K562 (cell line): ENCODE measurements at regions of chr12 and their contacts with region 1.

Region 1: DNA sequence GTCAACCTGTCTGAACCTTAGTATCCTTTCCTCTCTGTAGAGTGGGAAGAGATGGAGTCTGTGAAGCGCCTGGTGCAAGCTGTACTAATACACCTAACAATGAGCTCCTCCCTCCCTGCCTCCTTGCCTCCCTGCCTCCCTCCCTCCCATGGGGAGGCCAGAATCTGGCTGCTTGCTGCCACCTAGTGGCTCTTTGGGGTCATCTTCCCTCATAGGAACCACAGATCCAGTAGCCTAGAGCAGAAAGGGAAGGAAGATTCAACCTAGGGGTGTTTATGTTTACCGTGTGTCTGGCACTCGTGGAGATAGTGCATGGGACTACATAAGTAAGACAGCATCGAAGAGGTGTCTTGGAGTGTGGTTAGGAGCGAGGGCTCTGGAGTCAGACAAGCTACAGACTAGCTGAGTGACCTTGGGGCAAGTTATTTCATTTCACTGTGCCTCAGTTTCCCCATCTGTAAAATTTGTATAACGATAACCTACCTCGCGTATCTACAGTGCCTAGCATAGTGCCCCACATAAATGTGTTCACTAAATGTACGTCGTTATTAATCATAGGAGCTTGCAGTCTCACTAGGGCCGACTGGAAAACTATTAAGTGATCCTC is 35.5 kb upstream of the TSPAN9 start:
- DNase-seq: peak; percentile 78 to 85 (median 78)
- ATAC-seq: peak; percentile 99
- H3K4me3 ChIP-seq: no peak overlapping the region
- H3K27ac ChIP-seq: no peak overlapping the region
- H3K4me1 ChIP-seq: peaks cover 0 to 8% of the 10 kb centered on the region in 2 experiments; a peak in 2 of 5 replicates
- H3K27me3 ChIP-seq: no peaks in the 10 kb centered on the region
- CTCF ChIP-seq: peak; percentile 63 to 74 (median 71)
- EP300 ChIP-seq: no peak
- POLR2A ChIP-seq: no peak
- RAD21 ChIP-seq: peak; percentile 27 to 46; a peak in 3 of 4 replicates

Region 2: DNA sequence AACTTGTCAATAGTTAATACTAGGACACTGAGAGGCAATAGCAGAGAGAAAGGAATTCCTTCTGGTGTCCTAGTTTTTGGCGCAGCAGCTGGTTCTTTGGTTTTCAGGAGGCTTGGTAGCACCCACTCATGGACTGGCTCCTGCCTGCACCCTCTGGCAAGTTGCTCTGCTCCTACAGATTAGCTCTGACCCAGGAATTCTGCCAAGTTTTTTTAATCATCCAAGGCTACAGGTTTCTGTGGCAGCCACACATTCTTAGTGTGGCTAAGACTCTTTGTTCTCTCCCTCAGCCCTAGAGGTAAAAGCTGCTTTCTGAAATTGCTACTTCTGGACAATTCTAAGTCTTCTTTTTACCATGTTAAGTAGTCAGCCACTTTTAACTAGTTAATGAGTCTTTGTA is 318.9 kb before region 1 on chr12:
- CTCF ChIA-PET with region 1: no interaction called
- POLR2A ChIA-PET with region 1: no interaction called
- in situ Hi-C with region 1: no loop called
- intact Hi-C with region 1: no loop called
- DNase-seq: no peak
- ATAC-seq: no peak
- H3K4me3 ChIP-seq: no peak overlapping the region
- H3K27ac ChIP-seq: no peak overlapping the region
- H3K4me1 ChIP-seq: no peaks in the 10 kb centered on the region
- H3K27me3 ChIP-seq: no peaks in the 10 kb centered on the region
- CTCF ChIP-seq: no peak
- EP300 ChIP-seq: no peak
- POLR2A ChIP-seq: no peak
- RAD21 ChIP-seq: no peak

Region 3: DNA sequence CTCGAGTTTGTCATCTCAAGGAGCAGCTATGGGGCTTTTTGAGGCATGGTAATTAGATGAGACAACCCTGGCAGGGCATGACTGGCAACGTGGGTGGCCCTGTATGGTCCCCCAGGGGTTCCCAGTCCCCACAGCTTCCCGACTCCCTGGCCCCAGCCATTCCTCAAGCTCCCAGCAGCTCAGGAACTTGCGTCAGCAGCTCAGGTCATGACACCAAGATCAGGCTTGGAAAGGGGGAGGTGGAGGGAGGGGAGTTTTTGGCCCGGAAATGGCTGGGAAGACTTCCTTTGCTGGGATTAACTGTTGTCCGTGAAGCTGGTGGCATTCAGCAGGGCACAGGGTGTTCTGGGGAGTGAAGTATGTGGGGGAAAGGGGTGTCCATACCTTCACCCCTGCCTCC is 196.4 kb before region 1 on chr12:
- CTCF ChIA-PET with region 1: interaction called, 3 read pairs
- POLR2A ChIA-PET with region 1: no interaction called
- in situ Hi-C with region 1: loop called (anchors 5 kb)
- intact Hi-C with region 1: loop called (anchors 1 kb)
- DNase-seq: peak in 1 of 4 experiments; percentile 24
- ATAC-seq: peak; percentile 50
- H3K4me3 ChIP-seq: no peak overlapping the region
- H3K27ac ChIP-seq: no peak overlapping the region; the same call in 2 of the 3 replicates
- H3K4me1 ChIP-seq: peaks cover 8% of the 10 kb centered on the region in 2 experiments; a peak in 4 of 5 replicates
- H3K27me3 ChIP-seq: no peaks in the 10 kb centered on the region
- CTCF ChIP-seq: no peak
- EP300 ChIP-seq: no peak
- POLR2A ChIP-seq: no peak
- RAD21 ChIP-seq: no peak

Region 4: DNA sequence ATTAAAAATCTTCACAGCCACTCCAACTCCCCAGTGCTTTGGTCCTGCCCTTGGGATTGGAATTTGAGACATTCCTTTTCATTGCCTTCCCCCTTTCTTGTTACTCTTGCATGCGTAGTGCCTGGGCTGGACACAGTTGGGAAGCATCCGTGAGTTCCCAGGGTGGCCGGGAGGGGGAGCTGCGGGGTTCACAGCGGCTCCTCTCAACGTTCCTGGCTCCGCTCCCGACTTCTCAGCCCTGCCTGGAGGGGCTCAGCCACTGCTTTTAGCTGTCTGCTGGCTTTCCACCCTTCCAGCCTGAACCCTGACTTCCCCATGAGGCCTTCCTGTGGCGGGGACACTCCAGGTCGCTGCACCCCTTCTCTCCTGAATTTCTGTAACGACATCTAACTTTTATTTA is 188.0 kb before region 1 on chr12:
- CTCF ChIA-PET with region 1: no interaction called
- POLR2A ChIA-PET with region 1: interaction called, 3 read pairs
- in situ Hi-C with region 1: no loop called
- intact Hi-C with region 1: loop called (anchors 1 kb)
- DNase-seq: peak; percentile 76 to 80 (median 78)
- ATAC-seq: peak; percentile 96
- H3K4me3 ChIP-seq: no peak overlapping the region
- H3K27ac ChIP-seq: no peak overlapping the region
- H3K4me1 ChIP-seq: peaks cover 2 to 4% of the 10 kb centered on the region in 2 experiments; a peak in 3 of 5 replicates
- H3K27me3 ChIP-seq: no peaks in the 10 kb centered on the region
- CTCF ChIP-seq: peak; percentile 73 to 79 (median 74)
- EP300 ChIP-seq: no peak
- POLR2A ChIP-seq: no peak
- RAD21 ChIP-seq: peak in 1 of 2 experiments; percentile 46; a peak in 2 of 4 replicates